ENCODE measurements at regions of chr1 and their contacts with region 1.

Region 1: GRCh38 chr1:9494929-9495758 is 44.1 kb upstream of the SLC25A33 start:
- DNase-seq: peak; percentile 61
- H3K4me3 Mint-ChIP-seq: peak overlapping the region; percentile 66
- H3K27ac Mint-ChIP-seq: no peak overlapping the region
- H3K4me1 Mint-ChIP-seq: peaks cover 4% of the 10 kb centered on the region
- H3K27me3 Mint-ChIP-seq: peaks cover 11% of the 10 kb centered on the region

Region 2: GRCh38 chr1:9145021-9145668 is 350.0 kb before region 1 on chr1:
- intact Hi-C with region 1: loop called (anchors 1 kb)
- DNase-seq: no peak
- H3K4me3 Mint-ChIP-seq: no peak overlapping the region
- H3K27ac Mint-ChIP-seq: no peak overlapping the region
- H3K4me1 Mint-ChIP-seq: peaks cover 5% of the 10 kb centered on the region
- H3K27me3 Mint-ChIP-seq: peaks cover 3% of the 10 kb centered on the region

Region 3: DNA sequence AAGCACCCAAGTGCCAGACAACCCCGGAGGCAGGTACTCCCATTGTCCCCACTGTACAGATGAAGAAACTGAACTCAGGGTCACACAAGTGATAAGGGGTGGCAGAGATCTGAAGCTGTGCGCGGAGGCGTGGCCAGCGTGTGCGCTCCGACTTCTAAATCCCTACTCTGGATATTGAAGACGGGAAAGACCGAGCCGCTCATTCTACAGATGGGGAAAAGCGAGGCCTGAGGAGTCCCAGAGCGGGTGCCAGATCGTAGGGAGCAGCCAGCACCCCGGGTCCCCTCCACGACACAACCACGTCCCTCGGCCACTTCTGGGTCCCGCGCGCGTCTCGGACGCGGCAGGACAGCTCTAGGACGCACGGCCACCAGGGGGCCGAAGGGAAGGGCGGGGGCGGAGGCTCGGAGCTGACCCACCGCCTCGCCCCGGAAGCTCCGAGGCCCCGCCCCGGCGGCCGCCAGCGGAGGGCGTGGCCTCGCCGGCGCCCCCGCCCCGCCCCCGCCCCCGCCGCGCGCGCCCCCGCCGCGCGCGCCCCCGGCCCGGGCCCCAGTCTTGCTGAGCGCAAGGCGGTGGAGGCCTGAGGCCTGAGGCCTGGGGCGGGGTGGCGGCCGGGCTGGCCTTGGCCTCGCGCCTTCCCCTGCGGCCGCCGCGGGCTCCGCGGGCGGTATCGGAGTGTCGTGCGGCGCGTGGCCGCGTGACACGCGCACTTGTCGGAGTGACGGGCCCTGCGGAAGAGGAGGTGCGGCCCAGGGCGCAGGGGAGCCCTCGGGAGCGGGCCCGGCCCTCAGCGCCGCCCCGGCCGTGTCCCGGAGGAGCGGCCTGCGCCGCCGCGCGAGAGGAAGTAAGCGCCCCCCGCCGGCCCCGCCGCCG is 260.7 kb before region 1 on chr1 and contains the start of gene H6PD:
- intact Hi-C with region 1: loop called (anchors 1 kb)
- DNase-seq: peak; percentile 82
- H3K4me3 Mint-ChIP-seq: peak within 1 kb of the TSS; percentile 94
- H3K27ac Mint-ChIP-seq: peak within 1 kb of the TSS; percentile 98
- H3K4me1 Mint-ChIP-seq: peaks cover 36% of the 10 kb centered on the region
- H3K27me3 Mint-ChIP-seq: peaks cover 3% of the 10 kb centered on the region
- total RNA-seq, gene H6PD: 15.7 TPM in 2 replicates

Region 4: DNA sequence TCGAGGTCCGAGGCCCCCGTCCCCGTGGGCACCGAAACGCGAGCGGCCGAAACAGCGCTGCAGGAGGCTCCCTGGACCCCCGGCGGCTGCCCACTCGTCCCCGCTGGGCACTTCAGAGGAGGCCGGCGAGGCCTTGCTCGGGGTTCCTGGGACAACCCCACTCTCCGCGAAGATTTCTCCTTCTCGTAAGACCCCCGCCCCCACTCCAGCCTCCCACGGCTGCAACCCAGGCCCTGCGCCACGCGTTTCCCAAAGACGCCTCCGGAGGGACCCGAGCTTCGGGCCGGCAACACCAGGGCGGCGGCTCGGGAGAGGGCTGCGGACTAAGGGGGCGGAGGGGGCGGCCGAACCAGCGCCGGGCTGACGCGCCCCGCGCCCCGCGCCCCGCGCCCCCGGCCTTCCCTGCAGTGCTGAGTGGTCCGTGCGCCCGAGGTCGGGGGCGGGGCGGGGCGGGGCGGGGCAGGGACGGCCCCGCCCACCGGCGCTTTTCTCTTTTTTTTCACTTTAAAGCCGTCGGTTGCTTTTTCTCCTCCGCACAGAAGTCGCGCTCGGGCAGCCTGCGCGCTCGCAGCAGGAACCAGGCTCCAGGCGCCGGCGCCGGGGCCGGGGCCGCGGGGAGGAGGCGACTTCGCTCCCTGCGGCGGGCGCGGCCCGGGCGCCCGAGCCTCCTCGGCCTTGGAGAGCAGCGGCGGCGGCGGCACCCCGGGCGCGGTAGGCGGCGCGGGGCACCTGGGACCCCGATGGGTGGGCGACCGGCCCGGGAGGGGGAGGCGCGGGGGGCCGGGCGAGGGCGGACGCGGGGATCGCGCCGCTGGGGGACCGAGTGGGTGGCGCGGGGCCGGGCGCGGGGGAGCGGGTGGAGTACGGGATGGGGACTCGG is 202.5 kb before region 1 on chr1 and contains the start of gene SPSB1:
- intact Hi-C with region 1: loop called (anchors 1 kb)
- DNase-seq: peak; percentile 56
- H3K4me3 Mint-ChIP-seq: peak within 1 kb of the TSS; percentile 46
- H3K27ac Mint-ChIP-seq: no peak within 1 kb of the TSS
- H3K4me1 Mint-ChIP-seq: peaks cover 24% of the 10 kb centered on the region
- H3K27me3 Mint-ChIP-seq: no peaks in the 10 kb centered on the region
- total RNA-seq, gene SPSB1: 8.9 and 10.0 TPM in 2 replicates

Region 5: DNA sequence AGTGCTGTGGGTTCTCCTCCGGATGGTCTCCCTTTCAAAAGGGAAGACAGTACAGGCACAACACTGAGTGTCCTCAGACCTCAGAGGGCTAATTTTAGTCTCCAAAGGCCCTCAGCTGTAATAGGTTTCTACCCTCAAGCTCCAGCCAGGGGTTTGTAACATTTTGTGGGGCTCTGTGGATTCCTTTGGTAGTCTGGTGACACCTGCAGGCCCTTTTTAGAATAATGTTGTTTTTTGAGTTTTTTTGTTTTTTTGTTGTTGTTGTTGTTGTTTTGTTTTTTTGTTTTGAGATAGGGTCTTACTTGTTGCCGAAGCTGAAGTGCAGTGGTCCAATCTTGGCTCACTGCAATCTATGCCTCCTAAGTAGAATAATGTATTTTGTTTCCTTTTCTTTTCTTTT is 78.6 kb after region 1 on chr1:
- intact Hi-C with region 1: loop called (anchors 1 kb)
- DNase-seq: no peak
- H3K4me3 Mint-ChIP-seq: no peak overlapping the region
- H3K27ac Mint-ChIP-seq: no peak overlapping the region
- H3K4me1 Mint-ChIP-seq: no peaks in the 10 kb centered on the region
- H3K27me3 Mint-ChIP-seq: no peaks in the 10 kb centered on the region

Region 6: DNA sequence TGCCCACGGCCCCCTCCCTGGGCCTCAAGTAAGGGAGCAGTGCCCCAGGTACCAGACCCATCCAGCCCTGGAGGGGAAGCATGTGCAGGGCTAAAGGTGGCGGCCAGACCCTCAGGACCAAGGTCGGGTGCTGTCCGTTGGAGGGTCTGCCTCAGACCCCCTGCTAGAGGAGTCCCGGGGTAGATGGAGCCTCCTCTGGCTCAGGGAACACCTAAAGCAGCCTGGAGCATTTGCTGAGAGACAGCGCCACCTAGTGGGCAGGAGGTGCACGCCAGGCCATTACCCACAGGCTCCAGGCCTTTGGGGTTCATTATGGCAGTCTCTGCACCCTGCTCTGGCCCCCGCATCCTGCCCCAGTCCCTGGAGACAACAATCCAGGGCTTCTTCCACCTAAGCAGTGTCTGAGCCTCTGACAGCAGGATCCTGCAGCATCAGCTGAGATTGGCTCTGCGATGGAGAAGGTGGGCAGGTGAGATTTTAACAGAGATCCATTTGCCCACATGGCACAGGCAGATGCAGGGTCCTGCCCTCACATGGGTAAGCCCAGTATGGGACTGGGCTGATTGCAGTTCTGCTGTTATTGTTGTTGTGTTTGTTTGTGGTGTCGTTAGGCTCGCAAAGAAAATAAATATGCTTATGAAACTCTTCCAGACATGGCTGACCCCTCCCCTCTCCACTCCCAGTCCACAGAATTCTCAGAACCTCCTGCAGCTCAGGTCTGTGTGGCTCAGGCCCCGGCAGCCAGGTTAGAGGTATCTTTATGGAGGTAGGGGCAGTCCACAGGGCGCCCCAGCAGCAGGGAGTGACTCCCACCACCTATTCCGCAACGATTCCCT is 372.5 kb after region 1 on chr1:
- intact Hi-C with region 1: loop called (anchors 1 kb)
- DNase-seq: peak; percentile 79
- H3K4me3 Mint-ChIP-seq: no peak overlapping the region
- H3K27ac Mint-ChIP-seq: no peak overlapping the region
- H3K4me1 Mint-ChIP-seq: no peaks in the 10 kb centered on the region
- H3K27me3 Mint-ChIP-seq: no peaks in the 10 kb centered on the region